Activated B cell treated with CpG ODN at 0.5 μM for 24 hours (primary cell): ENCODE measurements at regions of chr20 and their contacts with region 1.

Region 1: GRCh38 chr20:58650776-58651558 is at the start of gene STX16:
- DNase-seq: peak; percentile 79
- ATAC-seq: peak; percentile 82
- H3K4me3 Mint-ChIP-seq: peak within 1 kb of the TSS; percentile 97
- H3K27ac Mint-ChIP-seq: peak within 1 kb of the TSS; percentile 93
- H3K4me1 Mint-ChIP-seq: peaks cover 20% of the 10 kb centered on the region
- H3K27me3 Mint-ChIP-seq: no peaks in the 10 kb centered on the region
- CTCF ChIP-seq: no peak
- total RNA-seq, gene STX16: 71.4 and 77.4 TPM in 2 replicates

Region 2: GRCh38 chr20:57718490-57719271 is 932.3 kb before region 1 on chr20:
- CTCF ChIA-PET with region 1: no interaction called
- POLR2A ChIA-PET with region 1: no interaction called
- intact Hi-C with region 1: loop called (anchors 2 kb)
- DNase-seq: peak; percentile 85
- ATAC-seq: peak; percentile 100
- H3K4me3 Mint-ChIP-seq: peak overlapping the region; percentile 68
- H3K27ac Mint-ChIP-seq: peak overlapping the region; percentile 56
- H3K4me1 Mint-ChIP-seq: peaks cover 9% of the 10 kb centered on the region
- H3K27me3 Mint-ChIP-seq: peaks cover 3% of the 10 kb centered on the region
- CTCF ChIP-seq: no peak

Region 3: GRCh38 chr20:58388882-58389323 is 262.1 kb before region 1 on chr20 and contains the start of gene VAPB:
- CTCF ChIA-PET with region 1: no interaction called
- POLR2A ChIA-PET with region 1: interaction called, 45 read pairs
- intact Hi-C with region 1: loop called (anchors 1 kb)
- DNase-seq: peak; percentile 99
- ATAC-seq: peak; percentile 97
- H3K4me3 Mint-ChIP-seq: peak within 1 kb of the TSS; percentile 91
- H3K27ac Mint-ChIP-seq: peak within 1 kb of the TSS; percentile 85
- H3K4me1 Mint-ChIP-seq: peaks cover 37% of the 10 kb centered on the region
- H3K27me3 Mint-ChIP-seq: peaks cover 4% of the 10 kb centered on the region
- CTCF ChIP-seq: no peak
- total RNA-seq, gene VAPB: 20.6 and 26.2 TPM in 2 replicates

Region 4: DNA sequence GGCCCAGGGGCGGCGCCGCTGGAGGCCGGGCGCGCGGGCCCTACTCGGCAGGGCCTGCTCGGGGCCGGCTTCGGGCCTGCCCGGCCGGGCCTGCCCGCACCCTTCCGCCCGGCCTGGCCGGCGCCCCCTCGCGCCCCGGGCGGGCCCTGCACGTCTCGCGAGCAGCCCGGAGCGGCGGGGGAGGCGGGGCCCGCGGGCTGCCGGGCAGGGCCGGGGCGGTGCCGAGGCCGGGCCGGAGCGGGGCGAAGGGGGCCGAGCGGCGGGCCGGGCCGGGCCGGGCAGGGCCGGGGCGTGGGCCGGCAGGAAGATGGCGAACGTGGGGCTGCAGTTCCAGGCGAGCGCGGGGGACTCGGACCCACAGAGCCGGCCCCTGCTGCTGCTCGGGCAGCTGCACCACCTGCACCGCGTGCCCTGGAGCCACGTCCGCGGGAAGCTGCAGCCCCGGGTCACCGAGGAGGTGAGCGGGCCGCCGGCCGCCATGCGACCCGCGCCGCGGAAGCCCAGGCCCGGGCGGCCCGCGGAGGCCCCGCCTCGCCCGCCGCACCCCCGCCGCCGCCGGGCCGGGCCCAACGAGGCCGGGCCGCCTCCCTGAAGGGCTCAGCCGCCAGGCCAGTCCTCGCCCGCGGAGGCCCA is 41.7 kb after region 1 on chr20 and contains the start of gene NPEPL1:
- CTCF ChIA-PET with region 1: no interaction called
- POLR2A ChIA-PET with region 1: interaction called, 8 read pairs
- intact Hi-C with region 1: loop called (anchors 1 kb)
- DNase-seq: peak; percentile 74
- ATAC-seq: peak; percentile 98
- H3K4me3 Mint-ChIP-seq: peak within 1 kb of the TSS; percentile 75
- H3K27ac Mint-ChIP-seq: no peak within 1 kb of the TSS
- H3K4me1 Mint-ChIP-seq: peaks cover 7% of the 10 kb centered on the region
- H3K27me3 Mint-ChIP-seq: no peaks in the 10 kb centered on the region
- CTCF ChIP-seq: no peak
- total RNA-seq, gene NPEPL1: 18.7 and 21.5 TPM in 2 replicates

Region 5: GRCh38 chr20:59032023-59032712 is 381.2 kb after region 1 on chr20 and contains the start of gene ATP5F1E:
- CTCF ChIA-PET with region 1: no interaction called
- POLR2A ChIA-PET with region 1: interaction called, 15 read pairs
- intact Hi-C with region 1: loop called (anchors 5 kb)
- DNase-seq: peak; percentile 98
- ATAC-seq: peak; percentile 96
- H3K4me3 Mint-ChIP-seq: peak within 1 kb of the TSS; percentile 96
- H3K27ac Mint-ChIP-seq: peak within 1 kb of the TSS; percentile 95
- H3K4me1 Mint-ChIP-seq: peaks cover 50% of the 10 kb centered on the region
- H3K27me3 Mint-ChIP-seq: no peaks in the 10 kb centered on the region
- CTCF ChIP-seq: no peak
- total RNA-seq, gene ATP5F1E: 84.0 and 86.1 TPM in 2 replicates

Region 6: GRCh38 chr20:59940174-59940971 is 1289.4 kb after region 1 on chr20 and contains the starts of genes FAM217B and PPP1R3D:
- CTCF ChIA-PET with region 1: no interaction called
- POLR2A ChIA-PET with region 1: no interaction called
- intact Hi-C with region 1: loop called (anchors 5 kb)
- DNase-seq: peak; percentile 91
- ATAC-seq: peak; percentile 96
- H3K4me3 Mint-ChIP-seq: peak within 1 kb of the TSS; percentile 97
- H3K27ac Mint-ChIP-seq: peak within 1 kb of the TSS; percentile 95
- H3K4me1 Mint-ChIP-seq: peaks cover 37% of the 10 kb centered on the region
- H3K27me3 Mint-ChIP-seq: no peaks in the 10 kb centered on the region
- CTCF ChIP-seq: no peak
- total RNA-seq, gene FAM217B: 15.1 and 18.9 TPM in 2 replicates
- total RNA-seq, gene PPP1R3D: 7.1 and 7.5 TPM in 2 replicates